WTC11 (cell line): ENCODE measurements at regions of chr4 and their contacts with region 1.

Region 1: GRCh38 chr4:151276787-151277562 is at the start of gene PRSS48:
- DNase-seq: peak; percentile 90
- ATAC-seq: peak; percentile 98
- H3K4me3 Mint-ChIP-seq: no peak within 1 kb of the TSS
- H3K27ac Mint-ChIP-seq: peak within 1 kb of the TSS; percentile 1; the same call in 1 of the 2 replicates
- H3K4me1 Mint-ChIP-seq: peaks cover 22% of the 10 kb centered on the region
- H3K27me3 Mint-ChIP-seq: no peaks in the 10 kb centered on the region
- CTCF ChIP-seq: peak; percentile 87
- total RNA-seq, gene PRSS48: not detected in 3 replicates

Region 2: GRCh38 chr4:151117371-151117962 is 159.5 kb before region 1 on chr4:
- CTCF ChIA-PET with region 1: interaction called, 11 read pairs
- POLR2A ChIA-PET with region 1: no interaction called
- DNase-seq: peak; percentile 65
- ATAC-seq: peak; percentile 77
- H3K4me3 Mint-ChIP-seq: no peak overlapping the region
- H3K27ac Mint-ChIP-seq: peak overlapping the region; percentile 74; the same call in 1 of the 2 replicates
- H3K4me1 Mint-ChIP-seq: no peaks in the 10 kb centered on the region
- H3K27me3 Mint-ChIP-seq: no peaks in the 10 kb centered on the region
- CTCF ChIP-seq: peak; percentile 29

Region 3: GRCh38 chr4:151218343-151218742 is 58.6 kb before region 1 on chr4:
- CTCF ChIA-PET with region 1: no interaction called
- POLR2A ChIA-PET with region 1: no interaction called
- DNase-seq: no peak
- ATAC-seq: no peak
- H3K4me3 Mint-ChIP-seq: no peak overlapping the region
- H3K27ac Mint-ChIP-seq: no peak overlapping the region
- H3K4me1 Mint-ChIP-seq: peaks cover 8% of the 10 kb centered on the region
- H3K27me3 Mint-ChIP-seq: no peaks in the 10 kb centered on the region
- CTCF ChIP-seq: no peak

Region 4: GRCh38 chr4:151266497-151266896 is 10.5 kb before region 1 on chr4:
- CTCF ChIA-PET with region 1: interaction called, 19 read pairs
- POLR2A ChIA-PET with region 1: no interaction called
- DNase-seq: no peak
- ATAC-seq: no peak
- H3K4me3 Mint-ChIP-seq: no peak overlapping the region
- H3K27ac Mint-ChIP-seq: no peak overlapping the region
- H3K4me1 Mint-ChIP-seq: no peaks in the 10 kb centered on the region
- H3K27me3 Mint-ChIP-seq: no peaks in the 10 kb centered on the region
- CTCF ChIP-seq: no peak

Region 5: DNA sequence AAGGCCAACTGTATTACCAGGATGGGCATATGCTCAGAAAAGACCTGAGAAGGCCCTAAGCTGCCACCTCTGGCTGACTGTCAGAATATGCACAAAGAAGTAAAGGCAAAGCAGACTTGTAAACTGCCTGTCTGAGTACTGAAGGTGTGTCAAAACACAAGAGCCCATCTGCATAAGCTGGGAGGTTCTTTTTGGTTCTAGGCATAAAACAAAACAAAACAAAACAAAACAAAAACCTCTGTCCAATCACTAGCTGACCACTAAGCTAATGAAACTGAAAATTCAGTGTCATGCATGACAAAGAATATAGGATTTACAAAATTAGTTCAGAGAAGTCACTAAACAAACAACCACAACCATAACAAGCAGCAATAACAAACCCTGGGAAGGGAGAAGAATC is 27.8 kb after region 1 on chr4:
- CTCF ChIA-PET with region 1: interaction called, 13 read pairs
- POLR2A ChIA-PET with region 1: no interaction called
- DNase-seq: no peak
- ATAC-seq: peak; percentile 83
- H3K4me3 Mint-ChIP-seq: no peak overlapping the region
- H3K27ac Mint-ChIP-seq: peak overlapping the region; percentile 87; the same call in 1 of the 2 replicates
- H3K4me1 Mint-ChIP-seq: peaks cover 41% of the 10 kb centered on the region
- H3K27me3 Mint-ChIP-seq: no peaks in the 10 kb centered on the region
- CTCF ChIP-seq: no peak

Region 6: GRCh38 chr4:151325111-151325948 is 48.4 kb after region 1 on chr4 and contains the start of gene SH3D19:
- CTCF ChIA-PET with region 1: interaction called, 14 read pairs
- POLR2A ChIA-PET with region 1: no interaction called
- DNase-seq: peak; percentile 58
- ATAC-seq: peak; percentile 73
- H3K4me3 Mint-ChIP-seq: peak within 1 kb of the TSS; percentile 94
- H3K27ac Mint-ChIP-seq: peak within 1 kb of the TSS; percentile 95
- H3K4me1 Mint-ChIP-seq: peaks cover 38% of the 10 kb centered on the region
- H3K27me3 Mint-ChIP-seq: no peaks in the 10 kb centered on the region
- CTCF ChIP-seq: no peak
- total RNA-seq, gene SH3D19: 39.2 to 41.6 TPM (median 41.4 TPM) in 3 replicates

Region 7: GRCh38 chr4:151362404-151363164 is 85.6 kb after region 1 on chr4:
- CTCF ChIA-PET with region 1: interaction called, 13 read pairs
- POLR2A ChIA-PET with region 1: no interaction called
- DNase-seq: peak; percentile 91
- ATAC-seq: peak; percentile 99
- H3K4me3 Mint-ChIP-seq: no peak overlapping the region
- H3K27ac Mint-ChIP-seq: no peak overlapping the region
- H3K4me1 Mint-ChIP-seq: peaks cover 7% of the 10 kb centered on the region; the same call in 1 of the 2 replicates
- H3K27me3 Mint-ChIP-seq: no peaks in the 10 kb centered on the region
- CTCF ChIP-seq: peak; percentile 85

Region 8: GRCh38 chr4:151604238-151604637 is 327.3 kb after region 1 on chr4:
- CTCF ChIA-PET with region 1: interaction called, 14 read pairs
- POLR2A ChIA-PET with region 1: no interaction called
- DNase-seq: no peak
- ATAC-seq: peak; percentile 82
- H3K4me3 Mint-ChIP-seq: no peak overlapping the region
- H3K27ac Mint-ChIP-seq: peak overlapping the region; percentile 20; the same call in 1 of the 2 replicates
- H3K4me1 Mint-ChIP-seq: peaks cover 18% of the 10 kb centered on the region
- H3K27me3 Mint-ChIP-seq: no peaks in the 10 kb centered on the region
- CTCF ChIP-seq: no peak